ENCODE measurements at regions of chr2 and their contacts with region 1.

Region 1: GRCh38 chr2:113756355-113757137 is at the start of gene SLC35F5:
- H3K4me3 Mint-ChIP-seq: peak within 1 kb of the TSS; percentile 87
- H3K27ac Mint-ChIP-seq: peak within 1 kb of the TSS; percentile 95
- H3K4me1 Mint-ChIP-seq: peaks cover 5% of the 10 kb centered on the region
- H3K27me3 Mint-ChIP-seq: no peaks in the 10 kb centered on the region

Region 2: DNA sequence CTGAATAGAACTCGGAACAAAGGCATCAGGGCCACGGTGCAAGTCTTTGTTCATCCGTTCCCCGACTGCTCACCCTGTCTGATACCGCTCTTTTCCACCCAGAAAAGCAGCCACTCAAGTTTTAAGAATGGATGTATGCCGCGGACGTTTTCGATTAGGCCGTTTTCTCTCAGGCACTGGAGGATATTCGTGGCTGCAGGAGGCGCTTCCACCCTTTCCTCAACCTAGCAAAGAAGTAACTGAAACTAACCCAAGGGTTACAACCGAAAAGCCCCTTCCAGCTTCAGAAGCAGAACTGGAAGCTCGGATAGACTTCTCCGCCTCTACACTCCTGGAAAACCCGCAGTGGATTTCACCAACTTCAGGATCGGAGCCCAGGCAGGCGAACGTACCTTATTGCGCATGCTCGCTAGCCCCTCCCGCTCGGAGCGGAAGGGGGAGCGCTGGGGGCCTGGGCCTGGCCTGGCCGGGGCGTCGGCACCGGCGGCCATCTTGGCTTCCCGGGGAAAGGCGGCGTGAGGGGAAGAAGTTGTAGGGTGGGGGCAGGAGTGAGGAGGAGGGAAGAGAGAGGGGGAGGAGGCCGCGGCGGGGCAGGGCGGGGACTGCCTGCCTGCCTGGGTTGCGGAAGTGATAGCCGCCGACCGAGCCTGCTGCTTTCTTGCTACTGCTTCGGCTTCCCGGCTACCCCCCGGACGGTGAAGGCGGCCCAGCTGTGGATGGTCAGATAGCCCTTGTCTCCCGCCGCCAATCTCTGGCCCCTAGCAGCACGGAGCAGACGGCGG is 133.1 kb after region 1 on chr2 and contains the start of gene ACTR3:
- intact Hi-C with region 1: loop called (anchors 2 kb)
- H3K4me3 Mint-ChIP-seq: peak within 1 kb of the TSS; percentile 96
- H3K27ac Mint-ChIP-seq: peak within 1 kb of the TSS; percentile 98
- H3K4me1 Mint-ChIP-seq: peaks cover 70% of the 10 kb centered on the region
- H3K27me3 Mint-ChIP-seq: no peaks in the 10 kb centered on the region

Region 3: GRCh38 chr2:113930448-113930847 is 173.9 kb after region 1 on chr2:
- intact Hi-C with region 1: loop called (anchors 5 kb)
- H3K4me3 Mint-ChIP-seq: no peak overlapping the region
- H3K27ac Mint-ChIP-seq: no peak overlapping the region
- H3K4me1 Mint-ChIP-seq: peaks cover 24% of the 10 kb centered on the region
- H3K27me3 Mint-ChIP-seq: no peaks in the 10 kb centered on the region